CD8-positive, alpha-beta T cell (primary cell): ENCODE measurements at regions of chr14 and their contacts with region 1.

Region 1: GRCh38 chr14:92513204-92513973 is at the start of gene RIN3:
- DNase-seq: peak in 8 of 9 experiments; percentile 21 to 75 (median 54)
- ATAC-seq: peak; percentile 49
- H3K4me3 ChIP-seq: peak within 1 kb of the TSS; percentile 86 to 93
- H3K4me3 Mint-ChIP-seq: peak within 1 kb of the TSS; percentile 66
- H3K27ac ChIP-seq: peak within 1 kb of the TSS; percentile 71 to 79
- H3K27ac Mint-ChIP-seq: peak within 1 kb of the TSS; percentile 86
- H3K4me1 ChIP-seq: peaks cover 50% of the 10 kb centered on the region
- H3K4me1 Mint-ChIP-seq: peaks cover 47% of the 10 kb centered on the region
- H3K27me3 ChIP-seq: no peaks in the 10 kb centered on the region
- H3K27me3 Mint-ChIP-seq: no peaks in the 10 kb centered on the region
- CTCF ChIP-seq: no peak
- total RNA-seq, gene RIN3: 82.4 to 82.7 TPM

Region 2: DNA sequence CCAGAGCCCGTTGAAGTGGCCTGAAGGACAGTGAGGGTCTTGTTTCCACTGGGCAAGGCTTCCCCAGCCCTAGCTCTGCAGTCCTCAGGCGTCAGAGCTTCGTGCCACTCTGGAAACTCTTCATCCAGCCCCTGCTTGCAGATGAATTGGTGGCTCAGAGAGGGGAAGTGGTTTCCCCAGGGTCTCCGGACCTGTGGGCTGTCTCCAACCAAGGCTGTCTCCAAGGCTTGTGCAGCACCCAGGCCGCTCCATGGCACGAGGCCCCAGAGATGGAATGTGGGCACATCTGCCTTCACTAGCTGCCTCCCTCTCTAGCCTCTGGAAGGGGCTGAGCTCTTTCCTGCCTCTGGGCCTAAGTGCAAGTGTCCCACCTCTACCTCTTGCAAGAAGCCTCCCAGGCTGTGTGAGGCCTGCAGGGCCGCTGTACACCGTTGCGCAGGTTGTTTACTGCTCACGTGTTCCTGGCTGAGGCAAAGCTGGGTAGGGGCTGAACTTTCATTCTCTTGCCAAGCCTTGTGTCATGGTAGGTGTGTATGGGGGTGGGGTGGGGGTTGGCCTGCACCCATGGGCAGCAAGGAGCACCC is 11.3 kb after region 1 on chr14:
- CTCF ChIA-PET with region 1: interaction called, 6 read pairs
- POLR2A ChIA-PET with region 1: interaction called, 12 read pairs
- intact Hi-C with region 1: no loop called
- DNase-seq: peak in 1 of 9 experiments; percentile 28
- ATAC-seq: peak; percentile 23
- H3K4me3 ChIP-seq: no peak overlapping the region
- H3K4me3 Mint-ChIP-seq: no peak overlapping the region
- H3K27ac ChIP-seq: peak overlapping the region; percentile 3 to 55
- H3K27ac Mint-ChIP-seq: peak overlapping the region; percentile 66
- H3K4me1 ChIP-seq: peaks cover 53% of the 10 kb centered on the region
- H3K4me1 Mint-ChIP-seq: peaks cover 74% of the 10 kb centered on the region
- H3K27me3 ChIP-seq: no peaks in the 10 kb centered on the region
- H3K27me3 Mint-ChIP-seq: no peaks in the 10 kb centered on the region
- CTCF ChIP-seq: no peak

Region 3: DNA sequence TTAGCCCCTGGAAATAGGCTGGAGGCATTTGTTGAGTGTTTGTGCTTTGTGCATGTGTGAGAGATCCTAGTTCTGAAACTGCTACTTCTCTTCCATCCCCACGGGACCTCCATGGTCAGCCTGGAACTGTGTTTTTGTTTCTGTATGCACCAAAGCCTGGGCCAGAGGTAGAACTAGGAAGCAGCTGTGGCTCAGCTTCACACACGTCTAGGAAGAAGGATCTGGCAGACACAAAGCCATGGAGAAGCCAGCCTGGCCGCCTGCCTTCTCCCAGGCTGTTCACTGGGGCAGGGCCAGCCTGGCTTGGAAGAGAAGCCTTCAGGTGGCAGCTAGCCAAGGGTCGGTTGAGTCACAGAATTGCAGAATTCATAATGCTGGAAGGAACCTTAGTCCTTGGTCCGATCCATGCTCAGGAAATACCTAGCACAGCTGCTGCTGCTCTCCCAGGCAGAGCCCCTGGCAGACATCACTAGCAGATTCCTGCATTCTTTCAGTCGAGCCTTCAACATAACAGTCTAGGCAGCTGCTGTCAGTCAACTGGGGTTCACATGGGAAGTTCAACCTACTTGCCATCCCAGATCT is 27.2 kb after region 1 on chr14:
- CTCF ChIA-PET with region 1: no interaction called
- POLR2A ChIA-PET with region 1: interaction called, 11 read pairs
- intact Hi-C with region 1: no loop called
- DNase-seq: peak in 1 of 9 experiments; percentile 33
- ATAC-seq: no peak
- H3K4me3 ChIP-seq: no peak overlapping the region
- H3K4me3 Mint-ChIP-seq: peak overlapping the region; percentile 42
- H3K27ac ChIP-seq: peak overlapping the region in 1 of 2 experiments; percentile 72
- H3K27ac Mint-ChIP-seq: peak overlapping the region; percentile 62
- H3K4me1 ChIP-seq: peaks cover 53% of the 10 kb centered on the region
- H3K4me1 Mint-ChIP-seq: peaks cover 75% of the 10 kb centered on the region
- H3K27me3 ChIP-seq: no peaks in the 10 kb centered on the region
- H3K27me3 Mint-ChIP-seq: no peaks in the 10 kb centered on the region
- CTCF ChIP-seq: no peak

Region 4: DNA sequence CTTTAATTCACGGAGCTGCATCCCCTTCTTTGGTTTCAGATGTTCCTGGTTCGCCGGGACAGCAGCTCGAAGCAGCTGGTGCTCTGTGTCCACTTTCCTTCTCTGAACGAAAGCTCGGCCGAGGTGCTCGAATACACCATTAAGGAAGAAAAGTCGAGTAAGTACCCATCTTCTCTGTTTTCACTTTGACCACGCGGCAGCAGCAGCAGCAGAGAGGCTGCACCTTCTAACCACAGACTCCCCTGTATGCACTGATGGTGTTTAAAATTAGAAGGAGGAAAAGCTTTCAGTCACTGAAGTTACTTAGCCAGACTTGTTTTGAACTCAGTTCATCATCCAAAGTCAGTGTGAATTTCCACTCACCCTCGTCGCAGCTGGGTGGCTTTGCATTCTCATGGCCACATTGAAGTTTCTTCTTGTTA is 63.9 kb after region 1 on chr14:
- CTCF ChIA-PET with region 1: interaction called, 3 read pairs
- POLR2A ChIA-PET with region 1: interaction called, 11 read pairs
- intact Hi-C with region 1: no loop called
- DNase-seq: peak in 7 of 9 experiments; percentile 24 to 72 (median 47)
- ATAC-seq: peak; percentile 70
- H3K4me3 ChIP-seq: peak overlapping the region; percentile 17 to 29
- H3K4me3 Mint-ChIP-seq: peak overlapping the region; percentile 81
- H3K27ac ChIP-seq: peak overlapping the region in 1 of 2 experiments; percentile 62
- H3K27ac Mint-ChIP-seq: peak overlapping the region; percentile 92
- H3K4me1 ChIP-seq: peaks cover 61% of the 10 kb centered on the region
- H3K4me1 Mint-ChIP-seq: peaks cover 84% of the 10 kb centered on the region
- H3K27me3 ChIP-seq: no peaks in the 10 kb centered on the region
- H3K27me3 Mint-ChIP-seq: no peaks in the 10 kb centered on the region
- CTCF ChIP-seq: no peak

Region 5: DNA sequence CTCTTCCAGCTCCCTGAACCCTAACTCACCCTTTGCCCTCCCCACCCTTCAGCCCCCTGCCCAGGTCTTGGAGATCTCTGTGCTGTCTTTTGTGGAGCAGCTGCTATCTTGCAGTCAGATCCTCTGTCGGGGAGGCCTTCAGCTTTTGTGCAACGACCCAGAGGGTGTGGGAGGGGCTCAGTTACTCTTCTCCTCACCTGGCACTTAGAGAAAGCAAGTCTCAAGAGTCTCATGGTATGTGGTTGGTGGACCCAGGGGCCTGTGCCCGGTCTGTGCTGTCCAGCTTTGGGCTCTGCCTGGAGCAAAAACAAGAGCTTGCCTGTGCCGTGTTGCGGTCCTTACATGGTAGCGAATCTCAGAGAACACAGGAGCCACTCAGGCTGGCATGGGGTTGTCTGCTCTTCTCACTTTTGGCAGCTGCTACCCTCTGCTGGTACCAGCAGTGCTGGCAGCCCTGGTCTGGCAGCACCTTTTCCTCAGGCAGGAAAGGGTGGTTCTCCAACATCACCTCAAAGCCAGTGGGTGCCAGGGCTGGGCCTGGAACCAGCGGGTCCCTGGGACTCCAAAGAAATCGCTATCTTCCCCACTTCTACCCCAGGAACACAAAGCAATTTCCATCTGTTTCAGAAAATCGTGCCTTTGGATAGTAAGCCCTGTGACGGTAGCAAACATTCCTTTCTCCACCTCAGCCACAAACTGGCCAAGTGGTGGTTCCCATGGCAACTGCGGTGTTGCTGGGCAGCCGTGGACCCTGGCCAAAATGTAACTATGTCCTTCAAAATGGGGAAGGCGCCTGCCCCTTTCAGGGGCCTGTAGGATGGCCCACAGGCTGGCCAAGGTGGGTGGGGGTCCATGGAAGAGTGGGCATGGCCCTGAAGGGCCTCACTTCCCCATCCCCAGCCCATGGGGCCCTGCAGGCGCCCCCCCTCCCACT is 90.2 kb after region 1 on chr14:
- CTCF ChIA-PET with region 1: interaction called, 5 read pairs
- POLR2A ChIA-PET with region 1: interaction called, 10 read pairs
- intact Hi-C with region 1: loop called (anchors 5 kb)
- DNase-seq: peak; percentile 41 to 85 (median 63)
- ATAC-seq: peak; percentile 99
- H3K4me3 ChIP-seq: no peak overlapping the region
- H3K4me3 Mint-ChIP-seq: peak overlapping the region; percentile 72
- H3K27ac ChIP-seq: no peak overlapping the region
- H3K27ac Mint-ChIP-seq: peak overlapping the region; percentile 81
- H3K4me1 ChIP-seq: peaks cover 30% of the 10 kb centered on the region
- H3K4me1 Mint-ChIP-seq: peaks cover 47% of the 10 kb centered on the region
- H3K27me3 ChIP-seq: no peaks in the 10 kb centered on the region
- H3K27me3 Mint-ChIP-seq: no peaks in the 10 kb centered on the region
- CTCF ChIP-seq: peak; percentile 68

Region 6: DNA sequence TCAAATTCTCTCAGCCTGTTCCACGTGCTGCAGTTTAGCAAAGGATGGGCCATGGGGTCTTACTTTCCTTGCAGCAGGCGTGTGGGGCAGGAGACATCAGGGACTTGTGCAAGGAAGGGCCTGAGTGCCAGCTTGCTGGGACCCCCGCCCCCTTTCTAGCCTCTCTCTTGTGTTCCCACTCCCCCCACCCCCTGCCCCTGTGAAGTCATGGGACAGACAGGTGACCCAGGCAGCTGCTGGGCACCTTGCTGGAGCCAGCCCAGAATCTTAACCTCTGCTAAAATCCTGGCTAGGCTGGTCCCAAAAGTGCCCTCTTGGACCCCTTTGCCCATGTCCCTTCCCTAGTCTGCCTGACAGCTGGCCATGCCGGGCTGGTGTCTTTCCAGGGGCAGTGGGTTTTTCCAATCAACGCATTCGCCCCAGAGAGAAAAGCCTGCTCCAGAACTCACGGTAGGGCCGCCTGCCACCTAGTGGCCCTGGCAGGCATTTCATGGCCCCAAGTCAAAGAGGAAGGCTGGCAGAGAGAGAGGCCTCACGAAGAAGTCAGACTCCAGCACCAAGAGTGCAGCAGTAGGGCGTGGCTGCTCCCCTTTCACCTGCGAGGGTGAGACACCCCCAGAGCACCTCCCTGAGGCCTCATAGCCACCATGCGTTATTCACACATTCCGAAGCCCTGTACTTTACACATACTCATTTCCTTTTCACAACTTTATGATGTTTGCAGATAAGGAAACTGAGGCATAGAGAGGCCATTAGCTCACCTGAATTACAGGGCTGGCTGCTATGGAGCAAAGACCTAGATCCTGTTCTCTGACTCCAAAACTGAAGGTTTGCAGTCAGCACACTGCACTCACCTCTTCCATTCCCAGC is 167.6 kb after region 1 on chr14:
- CTCF ChIA-PET with region 1: interaction called, 4 read pairs
- POLR2A ChIA-PET with region 1: no interaction called
- intact Hi-C with region 1: loop called in 1 of 2 experiments (anchors 2 kb)
- DNase-seq: peak; percentile 58 to 89 (median 77)
- ATAC-seq: peak; percentile 83
- H3K4me3 ChIP-seq: no peak overlapping the region
- H3K4me3 Mint-ChIP-seq: no peak overlapping the region
- H3K27ac ChIP-seq: peak overlapping the region in 1 of 2 experiments; percentile 72
- H3K27ac Mint-ChIP-seq: peak overlapping the region; percentile 88
- H3K4me1 ChIP-seq: peaks cover 25% of the 10 kb centered on the region
- H3K4me1 Mint-ChIP-seq: peaks cover 30% of the 10 kb centered on the region
- H3K27me3 ChIP-seq: no peaks in the 10 kb centered on the region
- H3K27me3 Mint-ChIP-seq: no peaks in the 10 kb centered on the region
- CTCF ChIP-seq: peak; percentile 87